ENCODE measurements at regions of chr12 and their contacts with region 1.

Region 1: GRCh38 chr12:13044002-13044905 is at the start of gene FAM234B:
- DNase-seq: peak; percentile 76
- ATAC-seq: peak; percentile 96
- H3K4me3 ChIP-seq: peak within 1 kb of the TSS; percentile 51 to 98 (median 88)
- H3K4me3 Mint-ChIP-seq: peak within 1 kb of the TSS; percentile 90
- H3K27ac ChIP-seq: peak within 1 kb of the TSS in 1 of 2 donors; percentile 77
- H3K27ac Mint-ChIP-seq: peak within 1 kb of the TSS; percentile 53
- H3K4me1 ChIP-seq: peaks cover 22% of the 10 kb centered on the region in 2 donors
- H3K4me1 Mint-ChIP-seq: peaks cover 25% of the 10 kb centered on the region
- H3K27me3 ChIP-seq: no peaks in the 10 kb centered on the region
- H3K27me3 Mint-ChIP-seq: no peaks in the 10 kb centered on the region
- CTCF ChIP-seq: no peak
- total RNA-seq, gene FAM234B: 7.7 and 8.2 TPM in 2 replicates

Region 2: DNA sequence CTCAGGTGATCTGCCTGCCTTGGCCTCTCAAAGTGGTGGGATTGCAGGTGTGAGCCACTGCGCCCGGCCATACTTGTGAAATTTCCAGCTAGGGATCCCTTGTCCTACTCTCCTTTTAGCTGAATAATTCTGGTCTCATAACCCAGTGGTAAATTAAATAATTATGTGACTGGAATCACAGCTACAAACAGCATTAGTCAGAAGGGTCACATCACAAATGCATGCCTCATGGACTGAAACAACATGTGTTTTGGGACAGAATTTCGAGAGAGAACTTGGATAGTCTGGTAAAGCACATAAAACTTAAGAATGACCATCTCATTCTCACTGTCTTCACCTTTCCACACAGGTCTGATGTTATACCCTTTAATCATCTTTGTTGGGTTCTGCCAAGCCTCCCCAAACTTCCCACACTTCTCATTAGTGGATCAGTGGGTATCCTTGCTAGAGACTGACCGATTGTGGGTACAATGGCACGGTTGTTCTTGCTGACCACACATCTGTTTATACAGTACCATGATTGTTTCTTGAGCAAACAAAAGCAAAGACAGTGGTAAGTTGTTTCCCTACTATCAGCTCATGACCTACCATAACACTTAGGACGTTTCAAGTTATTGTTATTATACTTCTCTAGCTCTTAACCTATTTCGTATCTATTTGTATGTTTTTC is 97.4 kb before region 1 on chr12:
- CTCF ChIA-PET with region 1: no interaction called
- POLR2A ChIA-PET with region 1: no interaction called
- intact Hi-C with region 1: no loop called
- DNase-seq: no peak
- ATAC-seq: no peak
- H3K4me3 ChIP-seq: no peak overlapping the region
- H3K4me3 Mint-ChIP-seq: no peak overlapping the region
- H3K27ac ChIP-seq: no peak overlapping the region
- H3K27ac Mint-ChIP-seq: no peak overlapping the region
- H3K4me1 ChIP-seq: no peaks in the 10 kb centered on the region
- H3K4me1 Mint-ChIP-seq: no peaks in the 10 kb centered on the region
- H3K27me3 ChIP-seq: no peaks in the 10 kb centered on the region
- H3K27me3 Mint-ChIP-seq: peaks cover 6% of the 10 kb centered on the region
- CTCF ChIP-seq: no peak

Region 3: GRCh38 chr12:13100882-13101769 is 56.9 kb after region 1 on chr12:
- CTCF ChIA-PET with region 1: interaction called, 5 read pairs
- POLR2A ChIA-PET with region 1: no interaction called
- intact Hi-C with region 1: loop called (anchors 2 kb)
- DNase-seq: peak; percentile 97
- ATAC-seq: peak; percentile 77
- H3K4me3 ChIP-seq: peak overlapping the region; percentile 39 to 82 (median 71)
- H3K4me3 Mint-ChIP-seq: peak overlapping the region; percentile 88
- H3K27ac ChIP-seq: peak overlapping the region; percentile 97 to 99
- H3K27ac Mint-ChIP-seq: peak overlapping the region; percentile 96
- H3K4me1 ChIP-seq: peaks cover 52 to 63% of the 10 kb centered on the region in 2 donors
- H3K4me1 Mint-ChIP-seq: peaks cover 62% of the 10 kb centered on the region
- H3K27me3 ChIP-seq: no peaks in the 10 kb centered on the region
- H3K27me3 Mint-ChIP-seq: no peaks in the 10 kb centered on the region
- CTCF ChIP-seq: no peak